Psoas muscle (tissue), 8 donors: ENCODE measurements at regions of chr16 and their contacts with region 1.

Region 1: GRCh38 chr16:2415085-2415484 is 14.2 kb upstream of the CCNF start:
- DNase-seq: no peak
- ATAC-seq: no peak
- H3K4me3 ChIP-seq: no peak overlapping the region
- H3K27ac ChIP-seq: no peak overlapping the region
- H3K4me1 ChIP-seq: no peaks in the 10 kb centered on the region
- H3K27me3 ChIP-seq: no peaks in the 10 kb centered on the region
- CTCF ChIP-seq: no peak

Region 2: GRCh38 chr16:2288726-2289125 is 126.4 kb before region 1 on chr16:
- intact Hi-C with region 1: loop called in 1 of 2 experiments (anchors 10 kb)
- DNase-seq: no peak
- ATAC-seq: no peak
- H3K4me3 ChIP-seq: no peak overlapping the region
- H3K27ac ChIP-seq: no peak overlapping the region
- H3K4me1 ChIP-seq: no peaks in the 10 kb centered on the region
- H3K27me3 ChIP-seq: no peaks in the 10 kb centered on the region
- CTCF ChIP-seq: no peak